ENCODE measurements at regions of chr18 and their contacts with region 1.

Region 1: GRCh38 chr18:47893939-47894699 is 36.3 kb downstream of the SMAD2 start:
- DNase-seq: no peak
- H3K4me3 ChIP-seq: no peak overlapping the region
- CTCF ChIP-seq: no peak

Region 2: GRCh38 chr18:47846431-47846830 is 47.7 kb before region 1 on chr18:
- in situ Hi-C with region 1: no loop called
- DNase-seq: no peak
- H3K4me3 ChIP-seq: no peak overlapping the region
- CTCF ChIP-seq: no peak

Region 3: GRCh38 chr18:47929681-47930198 is 35.6 kb after region 1 on chr18:
- in situ Hi-C with region 1: loop called (anchors 5 kb)
- DNase-seq: no peak
- H3K4me3 ChIP-seq: peak overlapping the region; percentile 88
- CTCF ChIP-seq: no peak

Region 4: GRCh38 chr18:47944972-47945843 is 51.1 kb after region 1 on chr18:
- in situ Hi-C with region 1: no loop called
- DNase-seq: no peak
- H3K4me3 ChIP-seq: no peak overlapping the region
- CTCF ChIP-seq: no peak

Region 5: GRCh38 chr18:48059455-48060010 is 165.4 kb after region 1 on chr18:
- in situ Hi-C with region 1: no loop called
- DNase-seq: no peak
- H3K4me3 ChIP-seq: no peak overlapping the region
- CTCF ChIP-seq: no peak